Activated T-helper 2 cell treated with anti-CD3 and anti-CD28 coated beads, Interferon-gamma antibody, Interleukin-2, Interleukin-4, amounts not matched to agents 10 μg/mL and 5 μg/mL and 100 μg/mL, durations not matched to agents 14 hours and 24 hours and 36 hours (primary cell): ENCODE measurements at regions of chr3 and their contacts with region 1.

Region 1: DNA sequence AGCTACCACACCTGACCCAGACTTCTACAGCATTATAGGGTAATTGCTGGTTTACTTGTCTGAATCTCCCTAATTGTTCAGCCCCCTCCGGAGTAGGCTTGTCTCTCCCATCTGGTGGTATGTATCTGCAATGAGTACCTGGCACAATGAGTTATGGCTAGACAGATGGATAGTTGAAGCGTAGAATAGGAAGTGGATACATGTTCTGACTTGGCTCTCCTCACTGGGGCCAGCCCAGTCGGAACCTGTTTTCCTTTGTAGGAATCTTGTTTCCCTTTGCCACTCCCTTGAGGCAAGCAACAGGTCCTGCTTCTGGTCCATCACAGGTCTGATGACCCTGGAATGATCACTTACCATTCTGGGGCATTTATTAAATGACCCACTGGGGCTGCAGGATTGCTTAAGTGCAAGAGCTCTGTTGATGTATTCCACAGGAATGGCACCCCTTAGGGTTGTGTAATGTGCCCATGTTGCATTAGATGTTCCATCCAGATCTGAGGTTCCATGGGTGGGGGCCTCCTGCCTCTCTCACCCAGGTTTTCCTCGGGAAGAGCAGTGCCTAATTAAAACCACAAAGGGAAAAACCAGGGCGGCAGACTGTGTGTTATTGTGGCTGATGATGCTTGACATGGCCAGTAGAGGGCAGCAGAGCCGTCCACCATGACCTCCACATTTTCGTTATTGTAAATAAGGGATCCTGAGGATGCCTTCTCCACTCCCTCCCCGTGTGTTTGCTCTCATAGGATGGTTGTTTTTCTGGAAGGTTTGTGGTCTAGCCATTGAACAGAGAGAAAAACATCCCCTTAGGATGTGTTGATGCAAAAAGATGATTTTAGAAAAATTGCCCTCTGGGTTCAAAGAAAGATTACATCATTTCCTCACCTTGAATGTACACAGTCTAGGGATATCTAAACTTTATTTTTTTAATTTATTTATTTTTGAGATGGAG is 58.0 kb downstream of the CMTM8 start:
- DNase-seq: peak; percentile 43
- H3K4me3 Mint-ChIP-seq: no peak overlapping the region
- H3K27ac Mint-ChIP-seq: no peak overlapping the region
- H3K4me1 Mint-ChIP-seq: peaks cover 32% of the 10 kb centered on the region
- H3K27me3 Mint-ChIP-seq: peaks cover 3% of the 10 kb centered on the region

Region 2: GRCh38 chr3:32257639-32258038 is 38.9 kb before region 1 on chr3:
- intact Hi-C with region 1: loop called (anchors 5 kb)
- DNase-seq: no peak
- H3K4me3 Mint-ChIP-seq: no peak overlapping the region
- H3K27ac Mint-ChIP-seq: peak overlapping the region; percentile 52
- H3K4me1 Mint-ChIP-seq: peaks cover 34% of the 10 kb centered on the region
- H3K27me3 Mint-ChIP-seq: peaks cover 2% of the 10 kb centered on the region

Region 3: GRCh38 chr3:32321095-32321790 is 24.7 kb after region 1 on chr3:
- intact Hi-C with region 1: no loop called
- DNase-seq: no peak
- H3K4me3 Mint-ChIP-seq: no peak overlapping the region
- H3K27ac Mint-ChIP-seq: no peak overlapping the region
- H3K4me1 Mint-ChIP-seq: no peaks in the 10 kb centered on the region
- H3K27me3 Mint-ChIP-seq: peaks cover 4% of the 10 kb centered on the region

Region 4: GRCh38 chr3:32334675-32335074 is 38.1 kb after region 1 on chr3:
- intact Hi-C with region 1: loop called (anchors 1 kb)
- DNase-seq: peak; percentile 33
- H3K4me3 Mint-ChIP-seq: no peak overlapping the region
- H3K27ac Mint-ChIP-seq: no peak overlapping the region
- H3K4me1 Mint-ChIP-seq: peaks cover 24% of the 10 kb centered on the region
- H3K27me3 Mint-ChIP-seq: no peaks in the 10 kb centered on the region

Region 5: GRCh38 chr3:32374788-32375595 is 78.5 kb after region 1 on chr3:
- intact Hi-C with region 1: loop called (anchors 2 kb)
- DNase-seq: peak; percentile 62
- H3K4me3 Mint-ChIP-seq: no peak overlapping the region
- H3K27ac Mint-ChIP-seq: peak overlapping the region; percentile 44
- H3K4me1 Mint-ChIP-seq: peaks cover 27% of the 10 kb centered on the region
- H3K27me3 Mint-ChIP-seq: peaks cover 4% of the 10 kb centered on the region

Region 6: GRCh38 chr3:32387512-32387911 is 91.0 kb after region 1 on chr3:
- intact Hi-C with region 1: no loop called
- DNase-seq: no peak
- H3K4me3 Mint-ChIP-seq: no peak overlapping the region
- H3K27ac Mint-ChIP-seq: no peak overlapping the region
- H3K4me1 Mint-ChIP-seq: peaks cover 14% of the 10 kb centered on the region
- H3K27me3 Mint-ChIP-seq: peaks cover 3% of the 10 kb centered on the region

Region 7: GRCh38 chr3:32401556-32402081 is 105.1 kb after region 1 on chr3:
- intact Hi-C with region 1: loop called (anchors 2 kb)
- DNase-seq: peak; percentile 51
- H3K4me3 Mint-ChIP-seq: peak overlapping the region; percentile 89
- H3K27ac Mint-ChIP-seq: peak overlapping the region; percentile 98
- H3K4me1 Mint-ChIP-seq: peaks cover 53% of the 10 kb centered on the region
- H3K27me3 Mint-ChIP-seq: no peaks in the 10 kb centered on the region

Region 8: GRCh38 chr3:32467333-32468070 is 171.0 kb after region 1 on chr3:
- intact Hi-C with region 1: loop called (anchors 5 kb)
- DNase-seq: peak; percentile 59
- H3K4me3 Mint-ChIP-seq: no peak overlapping the region
- H3K27ac Mint-ChIP-seq: no peak overlapping the region
- H3K4me1 Mint-ChIP-seq: peaks cover 29% of the 10 kb centered on the region
- H3K27me3 Mint-ChIP-seq: no peaks in the 10 kb centered on the region

Region 9: GRCh38 chr3:33231756-33232465 is 935.4 kb after region 1 on chr3:
- intact Hi-C with region 1: no loop called
- DNase-seq: no peak
- H3K4me3 Mint-ChIP-seq: no peak overlapping the region
- H3K27ac Mint-ChIP-seq: no peak overlapping the region
- H3K4me1 Mint-ChIP-seq: no peaks in the 10 kb centered on the region
- H3K27me3 Mint-ChIP-seq: peaks cover 20% of the 10 kb centered on the region